Activated CD4-positive, alpha-beta T cell treated with anti-CD3 and anti-CD28 coated beads for 36 hours (primary cell): ENCODE measurements at regions of chr6 and their contacts with region 1.

Region 1: GRCh38 chr6:128767705-128768104 is 115.2 kb upstream of the LAMA2 start:
- DNase-seq: no peak
- ATAC-seq: no peak
- H3K4me3 Mint-ChIP-seq: no peak overlapping the region
- H3K27ac Mint-ChIP-seq: no peak overlapping the region
- H3K4me1 Mint-ChIP-seq: no peaks in the 10 kb centered on the region
- H3K27me3 Mint-ChIP-seq: peaks cover 8% of the 10 kb centered on the region

Region 2: GRCh38 chr6:128929871-128930270 is 162.2 kb after region 1 on chr6:
- CTCF ChIA-PET with region 1: no interaction called
- POLR2A ChIA-PET with region 1: no interaction called
- intact Hi-C with region 1: no loop called
- DNase-seq: no peak
- ATAC-seq: no peak
- H3K4me3 Mint-ChIP-seq: no peak overlapping the region
- H3K27ac Mint-ChIP-seq: no peak overlapping the region
- H3K4me1 Mint-ChIP-seq: no peaks in the 10 kb centered on the region
- H3K27me3 Mint-ChIP-seq: peaks cover 15% of the 10 kb centered on the region

Region 3: GRCh38 chr6:129280749-129281148 is 513.0 kb after region 1 on chr6:
- CTCF ChIA-PET with region 1: no interaction called
- POLR2A ChIA-PET with region 1: interaction called, 13 read pairs
- intact Hi-C with region 1: no loop called
- DNase-seq: peak; percentile 53
- ATAC-seq: peak; percentile 97
- H3K4me3 Mint-ChIP-seq: peak overlapping the region; percentile 3
- H3K27ac Mint-ChIP-seq: no peak overlapping the region
- H3K4me1 Mint-ChIP-seq: peaks cover 12% of the 10 kb centered on the region
- H3K27me3 Mint-ChIP-seq: peaks cover 1% of the 10 kb centered on the region